Vagina (tissue), 2 donors: ENCODE measurements at regions of chr12 and their contacts with region 1.

Region 1: GRCh38 chr12:90343966-90344365 is 611.0 kb downstream of the CCER1 start:
- DNase-seq: no peak
- H3K4me3 ChIP-seq: no peak overlapping the region
- H3K27ac ChIP-seq: no peak overlapping the region
- H3K4me1 ChIP-seq: peaks cover 6% of the 10 kb centered on the region
- H3K27me3 ChIP-seq: no peaks in the 10 kb centered on the region
- CTCF ChIP-seq: no peak
- POLR2A ChIP-seq: no peak

Region 2: DNA sequence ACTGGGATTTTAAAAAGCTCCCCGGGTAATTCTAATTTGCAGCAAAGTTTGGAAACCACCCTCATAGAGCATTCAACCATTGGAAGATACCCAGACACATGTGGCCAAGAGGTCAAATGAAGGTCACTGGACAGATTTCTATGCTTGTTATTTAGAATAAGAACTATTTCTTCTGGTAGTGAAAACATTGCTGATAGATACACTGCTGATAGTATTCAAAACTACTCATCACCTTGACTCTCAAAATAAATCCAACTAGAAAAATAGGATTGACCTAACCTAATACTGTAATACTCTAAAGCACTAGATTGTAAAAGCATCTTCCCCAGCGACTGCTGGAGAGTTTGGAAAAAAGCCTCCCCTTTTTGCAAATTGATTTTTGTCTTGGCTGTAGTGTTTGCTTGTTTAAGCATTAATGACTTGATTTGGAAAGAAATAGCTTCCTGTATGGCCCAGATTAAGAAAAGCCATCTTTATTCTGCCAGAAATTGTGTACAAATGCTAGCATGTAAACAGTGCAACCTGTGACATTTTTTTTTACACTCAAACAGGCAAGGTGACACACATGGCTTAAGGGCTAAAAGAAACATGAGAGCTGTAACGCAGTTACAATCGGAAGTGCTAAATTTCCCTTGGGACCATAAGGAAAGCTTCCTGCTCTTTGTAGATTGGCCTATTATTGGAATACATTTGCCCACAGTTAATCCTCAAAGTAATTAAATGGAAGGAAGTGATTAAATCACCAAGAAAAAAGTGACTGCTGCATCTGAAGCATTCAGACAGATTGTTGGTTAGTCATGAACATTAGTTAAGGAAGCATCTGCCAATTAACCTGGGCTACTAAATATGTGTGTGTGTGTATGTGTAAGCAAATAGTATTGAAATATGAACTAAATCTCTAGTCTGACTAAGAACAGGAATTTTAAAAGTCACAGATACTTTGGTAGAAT is 278.8 kb before region 1 on chr12:
- intact Hi-C with region 1: no loop called
- DNase-seq: no peak
- H3K4me3 ChIP-seq: no peak overlapping the region
- H3K27ac ChIP-seq: no peak overlapping the region
- H3K4me1 ChIP-seq: no peaks in the 10 kb centered on the region
- H3K27me3 ChIP-seq: no peaks in the 10 kb centered on the region
- CTCF ChIP-seq: no peak
- POLR2A ChIP-seq: no peak

Region 3: DNA sequence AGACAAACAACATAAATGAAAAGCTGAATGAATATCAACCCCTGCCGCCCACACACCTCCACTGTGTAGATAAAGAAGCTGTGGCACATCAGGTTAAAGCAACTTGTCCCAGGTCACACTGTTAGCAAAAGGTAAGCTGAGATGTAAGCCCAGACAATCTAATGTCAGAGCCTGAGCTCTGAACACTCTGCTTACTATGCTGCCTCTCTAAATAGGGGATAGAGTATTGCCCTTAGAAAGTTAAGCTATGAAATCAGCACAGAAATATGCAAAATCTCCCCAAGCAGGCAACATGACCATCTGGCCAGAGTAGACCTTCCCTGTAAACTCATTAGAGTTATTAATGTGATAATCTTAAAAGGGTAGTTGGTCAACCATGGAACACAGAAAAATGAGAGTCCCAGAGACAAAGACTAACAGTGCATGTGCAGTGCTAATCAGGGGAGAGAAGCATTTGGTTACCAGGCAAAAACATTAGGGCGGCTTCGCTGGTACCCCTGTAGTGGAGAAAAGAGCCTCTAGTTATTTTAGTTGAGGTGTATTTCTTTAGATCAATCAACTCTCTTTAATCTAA is 1630.6 kb after region 1 on chr12:
- intact Hi-C with region 1: loop called (anchors 5 kb)
- DNase-seq: no peak
- H3K4me3 ChIP-seq: no peak overlapping the region
- H3K27ac ChIP-seq: no peak overlapping the region
- H3K4me1 ChIP-seq: no peaks in the 10 kb centered on the region
- H3K27me3 ChIP-seq: no peaks in the 10 kb centered on the region
- CTCF ChIP-seq: no peak
- POLR2A ChIP-seq: no peak